ENCODE measurements at regions of chr1 and their contacts with region 1.

Region 1: GRCh38 chr1:109807822-109808680 is 44.3 kb upstream of the EPS8L3 start:
- DNase-seq: no peak
- H3K4me3 Mint-ChIP-seq: no peak overlapping the region
- H3K27ac Mint-ChIP-seq: peak overlapping the region; percentile 74
- H3K4me1 Mint-ChIP-seq: peaks cover 48% of the 10 kb centered on the region
- H3K27me3 Mint-ChIP-seq: no peaks in the 10 kb centered on the region

Region 2: DNA sequence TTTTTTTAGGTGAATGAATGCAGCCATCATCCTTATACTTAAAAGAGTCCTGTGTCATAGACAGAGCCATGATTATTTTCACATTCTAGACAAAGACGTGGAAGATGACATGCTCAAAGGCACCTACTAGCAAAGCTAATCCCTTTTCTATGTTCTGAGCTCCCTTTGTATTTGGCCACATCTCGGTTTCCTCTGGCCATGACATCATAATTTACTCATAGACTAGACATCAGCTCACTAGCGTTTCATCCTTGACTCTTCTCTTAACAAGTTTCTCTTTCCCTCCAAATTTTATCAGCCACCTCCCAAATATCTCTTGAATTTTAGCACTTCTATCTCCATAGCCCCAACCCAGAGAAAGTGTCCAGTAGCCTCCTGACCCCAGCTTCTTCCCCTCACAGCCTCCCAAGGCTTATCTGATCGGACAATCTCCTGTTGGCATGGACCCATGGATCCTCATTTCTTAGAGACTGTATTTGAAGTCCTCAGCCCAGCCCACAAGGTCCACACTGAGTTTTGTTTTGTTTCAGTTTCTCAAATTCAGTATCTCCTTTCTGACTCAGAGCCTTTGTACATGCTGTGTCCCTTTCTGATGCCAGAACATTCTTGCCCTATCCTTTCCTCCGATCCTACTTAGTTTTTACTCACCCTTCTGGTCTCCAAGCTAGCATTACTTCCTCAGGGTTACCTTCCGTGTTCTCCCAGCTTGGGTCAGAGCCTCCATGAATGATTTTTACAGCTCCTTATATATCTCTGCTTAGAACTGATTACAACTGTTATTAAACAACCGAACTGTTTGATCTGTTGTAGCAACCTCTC is 11.4 kb before region 1 on chr1:
- CTCF ChIA-PET with region 1: interaction called, 95 read pairs
- POLR2A ChIA-PET with region 1: no interaction called
- DNase-seq: peak; percentile 24
- H3K4me3 Mint-ChIP-seq: no peak overlapping the region
- H3K27ac Mint-ChIP-seq: peak overlapping the region; percentile 85
- H3K4me1 Mint-ChIP-seq: peaks cover 83% of the 10 kb centered on the region
- H3K27me3 Mint-ChIP-seq: no peaks in the 10 kb centered on the region

Region 3: DNA sequence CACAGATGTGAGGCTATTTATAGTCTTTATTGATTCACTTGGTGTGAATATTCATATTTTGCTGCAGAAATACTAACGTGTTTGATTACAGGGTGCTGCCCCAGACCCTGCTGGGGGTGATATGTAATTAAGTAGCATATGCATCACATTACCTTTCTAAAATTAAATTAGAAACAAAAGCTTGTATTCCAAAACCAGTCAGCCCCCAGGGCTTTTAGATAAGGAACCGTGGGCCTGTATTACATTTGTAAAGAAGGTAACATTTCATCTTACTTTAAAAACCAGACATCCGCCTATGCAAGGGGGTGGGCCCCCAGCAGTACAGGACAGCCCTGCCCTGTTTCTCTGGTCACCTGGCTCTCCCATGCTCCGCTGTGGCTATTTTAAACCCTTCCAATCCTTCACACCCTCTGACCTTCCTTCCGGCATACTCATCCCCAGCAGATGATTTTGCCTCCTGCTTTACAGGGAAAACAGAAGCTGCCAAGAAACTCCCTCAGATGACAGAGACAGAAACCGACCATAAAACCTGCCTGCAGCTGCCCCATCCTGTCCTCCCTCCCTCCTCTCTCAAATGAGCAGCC is 380.1 kb after region 1 on chr1:
- CTCF ChIA-PET with region 1: no interaction called
- POLR2A ChIA-PET with region 1: no interaction called
- DNase-seq: no peak
- H3K4me3 Mint-ChIP-seq: no peak overlapping the region
- H3K27ac Mint-ChIP-seq: no peak overlapping the region
- H3K4me1 Mint-ChIP-seq: no peaks in the 10 kb centered on the region
- H3K27me3 Mint-ChIP-seq: peaks cover 12% of the 10 kb centered on the region

Region 4: GRCh38 chr1:110200666-110201065 is 392.6 kb after region 1 on chr1:
- CTCF ChIA-PET with region 1: no interaction called
- POLR2A ChIA-PET with region 1: no interaction called
- DNase-seq: no peak
- H3K4me3 Mint-ChIP-seq: no peak overlapping the region
- H3K27ac Mint-ChIP-seq: no peak overlapping the region
- H3K4me1 Mint-ChIP-seq: peaks cover 16% of the 10 kb centered on the region
- H3K27me3 Mint-ChIP-seq: no peaks in the 10 kb centered on the region